Activated naive CD4-positive, alpha-beta T cell treated with anti-CD3 and anti-CD28 coated beads, Interleukin-2, amount 10 ng/mL, durations not matched to agents 7 days and 5 days (primary cell): ENCODE measurements at regions of chr7 and their contacts with region 1.

Region 1: GRCh38 chr7:116165717-116166116 is 44.6 kb upstream of the TES start:
- DNase-seq: no peak
- H3K4me3 Mint-ChIP-seq: no peak overlapping the region
- H3K27ac Mint-ChIP-seq: no peak overlapping the region
- H3K4me1 Mint-ChIP-seq: peaks cover 21% of the 10 kb centered on the region
- H3K27me3 Mint-ChIP-seq: peaks cover 23% of the 10 kb centered on the region

Region 2: DNA sequence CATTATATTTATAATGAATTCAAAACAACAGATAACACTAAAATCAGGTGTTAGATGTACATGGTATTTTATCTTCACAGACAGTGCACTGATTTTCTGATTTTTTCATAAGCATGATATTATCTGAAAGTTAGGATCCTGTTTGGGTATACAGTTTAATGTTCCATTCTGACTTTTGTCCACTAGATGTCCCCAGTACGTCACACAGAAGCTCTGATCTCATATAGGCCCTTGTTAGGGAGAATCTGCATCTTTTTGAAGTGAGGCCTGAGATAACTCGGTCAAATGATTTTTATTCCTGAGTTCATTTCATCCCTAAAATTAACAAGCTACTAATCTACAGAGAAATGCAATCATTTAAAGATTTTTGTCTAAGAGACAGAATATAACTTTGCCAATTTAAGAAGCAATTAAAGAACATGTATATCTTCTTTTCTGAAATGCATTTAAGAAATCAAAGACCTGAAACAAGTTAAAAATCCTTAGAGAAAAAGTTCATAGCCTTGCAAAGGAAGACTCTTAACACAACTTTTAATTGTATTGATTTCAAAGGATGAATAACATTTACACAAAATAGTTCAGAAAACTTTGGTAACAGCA is 27.4 kb before region 1 on chr7:
- CTCF ChIA-PET with region 1: interaction called, 20 read pairs
- DNase-seq: peak; percentile 39
- H3K4me3 Mint-ChIP-seq: no peak overlapping the region
- H3K27ac Mint-ChIP-seq: no peak overlapping the region
- H3K4me1 Mint-ChIP-seq: peaks cover 22% of the 10 kb centered on the region
- H3K27me3 Mint-ChIP-seq: peaks cover 7% of the 10 kb centered on the region

Region 3: DNA sequence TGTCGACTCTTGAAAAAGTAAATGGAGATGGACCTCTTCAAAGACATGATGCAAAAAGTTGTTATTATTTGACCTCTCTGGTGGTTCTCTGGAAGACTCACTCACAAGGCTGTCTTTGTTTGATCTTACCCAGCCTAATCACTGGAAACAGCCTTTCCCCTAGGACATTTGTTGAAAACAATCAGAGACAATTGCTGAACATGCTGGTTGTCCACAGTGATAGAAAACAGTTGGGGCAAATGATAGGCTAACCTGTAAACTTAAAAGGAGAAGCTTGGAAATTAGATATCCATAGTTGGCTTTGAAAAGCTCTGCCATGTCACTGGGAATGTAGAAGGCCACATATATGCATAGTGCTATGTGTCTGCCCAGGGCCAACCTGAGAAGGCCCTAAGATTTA is 21.7 kb after region 1 on chr7:
- CTCF ChIA-PET with region 1: no interaction called
- DNase-seq: no peak
- H3K4me3 Mint-ChIP-seq: no peak overlapping the region
- H3K27ac Mint-ChIP-seq: no peak overlapping the region
- H3K4me1 Mint-ChIP-seq: no peaks in the 10 kb centered on the region
- H3K27me3 Mint-ChIP-seq: peaks cover 18% of the 10 kb centered on the region